ENCODE measurements at regions of chr14 and their contacts with region 1.

Region 1: DNA sequence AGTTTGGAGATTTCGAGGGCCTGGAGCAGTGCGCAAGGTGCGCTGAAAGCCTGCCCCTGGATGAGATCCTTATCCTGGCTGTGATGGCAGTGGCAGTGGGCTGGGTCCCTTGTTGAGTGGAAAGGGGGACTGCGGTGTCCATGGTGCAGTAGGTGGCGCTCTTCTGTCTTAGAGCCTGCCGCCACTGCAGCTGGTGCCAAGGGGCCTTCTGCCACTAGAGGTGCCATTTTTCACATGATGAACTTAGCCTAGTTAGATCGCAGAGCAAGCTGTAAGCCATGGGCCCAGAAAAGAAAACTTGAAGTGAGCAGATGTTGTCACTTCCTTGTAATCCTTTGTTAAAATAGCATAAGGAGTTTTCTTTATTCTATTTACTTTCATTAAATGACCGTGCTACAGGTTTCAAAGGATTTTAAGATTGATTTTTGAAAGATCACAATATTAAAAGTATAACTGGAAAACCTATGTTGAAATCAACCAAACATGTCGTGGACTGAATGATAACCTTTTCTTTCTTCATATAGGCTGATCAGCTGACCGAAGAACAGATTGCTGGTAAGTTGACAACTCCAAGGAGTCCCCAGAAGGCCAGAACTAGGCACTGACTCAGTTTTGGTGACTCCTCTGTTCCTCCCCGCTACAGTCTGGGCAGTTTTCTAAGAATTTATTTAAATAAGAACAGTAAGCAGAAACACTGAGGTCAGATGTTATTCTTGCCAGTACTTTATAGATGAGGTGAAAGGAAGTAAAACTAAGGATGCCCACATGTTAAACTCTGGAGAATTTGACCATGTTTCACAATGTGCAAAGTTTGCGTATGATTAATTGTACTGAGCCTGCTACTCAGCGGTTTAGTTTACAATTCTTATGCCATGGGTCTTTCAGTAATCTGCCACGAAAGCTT is 3.0 kb downstream of the CALM1 start:
- DNase-seq: peak; percentile 87
- CTCF ChIP-seq: peak; percentile 100

Region 2: DNA sequence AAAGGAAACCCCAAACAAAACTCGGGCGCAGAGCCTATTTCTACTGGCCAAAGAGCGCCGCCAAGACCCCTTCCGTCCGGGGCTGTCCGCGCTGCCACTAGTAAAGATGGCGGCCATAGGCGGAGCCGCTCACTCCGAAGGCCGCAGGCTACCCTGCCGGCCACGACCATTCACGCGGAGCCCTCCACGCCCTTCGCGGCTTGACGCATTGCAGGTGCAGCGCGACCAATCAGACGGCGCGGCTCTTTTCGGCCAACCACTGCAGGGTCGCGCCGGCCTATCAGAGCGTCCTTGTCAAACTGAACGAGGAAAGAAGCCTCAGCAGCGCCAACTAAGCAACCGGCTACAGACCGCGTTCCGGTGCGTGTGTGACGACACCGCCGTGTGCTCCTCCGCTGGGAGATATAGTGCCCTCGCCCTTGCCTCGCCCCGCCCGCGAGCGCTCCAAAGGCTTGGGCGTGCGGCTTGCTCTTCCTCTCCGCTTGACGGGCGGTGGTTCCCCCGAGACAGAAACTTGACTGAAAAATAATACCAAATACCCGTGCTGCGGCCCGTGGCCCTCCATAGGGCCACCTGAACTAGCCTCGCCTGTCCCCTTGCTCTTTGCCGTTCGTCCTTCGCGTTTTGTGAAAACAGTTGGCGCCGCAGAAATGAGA is 16.6 kb before region 1 on chr14:
- CTCF ChIA-PET with region 1: interaction called, 40 read pairs
- POLR2A ChIA-PET with region 1: interaction called, 39 read pairs
- DNase-seq: peak; percentile 97
- CTCF ChIP-seq: no peak

Region 3: DNA sequence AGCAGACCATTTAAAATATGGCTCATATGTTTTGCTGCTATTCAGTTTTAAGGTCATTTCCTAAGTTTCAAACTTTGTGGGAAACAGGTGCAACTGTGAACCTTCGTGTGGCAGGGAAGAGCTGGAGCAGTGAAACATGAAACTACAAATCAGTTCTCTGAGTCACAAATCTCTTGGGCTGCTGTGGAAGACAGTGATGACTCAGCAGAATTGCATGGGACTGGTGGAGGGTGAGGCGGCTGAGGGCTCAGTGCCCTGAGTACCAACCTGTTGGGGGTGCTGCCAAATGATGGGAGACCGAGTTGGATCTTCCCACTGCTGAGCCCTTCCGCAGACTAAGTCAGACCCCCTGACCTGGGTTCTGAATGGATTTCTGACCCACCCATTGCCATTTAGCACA is 11.4 kb before region 1 on chr14:
- CTCF ChIA-PET with region 1: interaction called, 40 read pairs
- POLR2A ChIA-PET with region 1: interaction called, 39 read pairs
- DNase-seq: no peak
- CTCF ChIP-seq: no peak

Region 4: GRCh38 chr14:90416720-90417119 is 16.9 kb after region 1 on chr14:
- CTCF ChIA-PET with region 1: interaction called, 18 read pairs
- POLR2A ChIA-PET with region 1: interaction called, 5 read pairs
- DNase-seq: no peak
- CTCF ChIP-seq: no peak

Region 5: GRCh38 chr14:90440021-90440451 is 40.2 kb after region 1 on chr14:
- CTCF ChIA-PET with region 1: no interaction called
- POLR2A ChIA-PET with region 1: no interaction called
- DNase-seq: no peak
- CTCF ChIP-seq: no peak

Region 6: DNA sequence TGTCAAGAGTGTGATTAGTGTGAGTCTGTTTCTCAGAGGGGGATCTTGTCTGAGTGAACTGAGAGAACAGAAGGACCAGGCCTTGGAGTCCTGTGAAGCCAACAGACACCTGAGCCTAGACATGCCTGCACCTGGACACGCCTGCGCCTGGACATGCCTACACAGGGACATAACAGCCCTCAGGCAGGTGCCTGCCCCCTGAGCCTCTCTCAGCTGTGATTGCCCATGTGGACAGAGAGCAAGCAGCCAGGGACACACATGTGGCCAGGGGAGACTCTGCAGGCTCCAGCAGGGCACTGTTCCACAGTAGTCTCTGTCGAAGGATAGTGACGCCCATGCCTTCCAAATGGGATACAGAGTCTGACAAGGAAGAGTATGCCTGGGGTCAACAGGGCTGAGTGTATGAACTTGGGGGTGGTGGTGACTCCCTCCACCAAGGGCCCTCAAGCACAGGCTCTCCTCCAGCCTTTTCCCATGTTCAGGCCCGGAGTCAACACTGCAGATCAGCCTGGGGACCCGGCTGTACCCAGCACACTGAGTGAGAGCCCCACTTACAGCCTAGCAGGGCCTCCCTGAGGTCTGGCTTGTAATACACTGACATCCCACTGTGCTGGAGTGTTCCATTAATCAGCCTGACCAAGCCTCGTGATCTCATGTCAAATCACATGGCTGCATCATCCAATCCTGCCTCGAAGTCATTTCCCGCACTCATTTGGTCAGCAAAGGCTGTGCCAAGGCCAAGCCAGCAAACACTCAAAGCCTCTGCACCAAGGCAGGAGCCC is 170.0 kb after region 1 on chr14:
- CTCF ChIA-PET with region 1: no interaction called
- POLR2A ChIA-PET with region 1: no interaction called
- DNase-seq: no peak
- CTCF ChIP-seq: no peak

Measured in GM10248 (cell line).